ENCODE measurements at regions of chr2 and their contacts with region 1.

Region 1: DNA sequence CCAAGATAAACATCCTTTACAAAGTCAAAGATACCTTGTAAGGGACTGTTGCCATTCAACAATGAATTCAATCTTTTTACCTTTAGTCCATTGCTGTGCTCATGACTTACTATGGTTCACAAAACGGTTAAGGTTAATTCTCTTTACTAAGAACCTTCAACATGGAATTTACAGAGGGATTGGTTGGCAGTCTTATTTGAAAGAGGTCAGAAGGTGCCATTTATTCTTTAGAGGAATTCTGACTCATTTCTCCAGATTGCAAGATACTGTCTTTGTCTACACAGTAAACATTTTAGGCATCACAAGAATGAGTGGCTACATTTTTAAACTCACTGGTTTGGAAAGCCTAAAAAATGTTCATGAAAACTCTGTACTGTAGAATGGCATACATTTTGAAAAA is 17.4 kb downstream of the KCNH7 start:
- DNase-seq: no peak
- H3K4me3 Mint-ChIP-seq: no peak overlapping the region
- H3K27ac Mint-ChIP-seq: peak overlapping the region; percentile 33
- H3K4me1 Mint-ChIP-seq: peaks cover 35% of the 10 kb centered on the region
- H3K27me3 Mint-ChIP-seq: no peaks in the 10 kb centered on the region
- CTCF ChIP-seq: no peak

Region 2: DNA sequence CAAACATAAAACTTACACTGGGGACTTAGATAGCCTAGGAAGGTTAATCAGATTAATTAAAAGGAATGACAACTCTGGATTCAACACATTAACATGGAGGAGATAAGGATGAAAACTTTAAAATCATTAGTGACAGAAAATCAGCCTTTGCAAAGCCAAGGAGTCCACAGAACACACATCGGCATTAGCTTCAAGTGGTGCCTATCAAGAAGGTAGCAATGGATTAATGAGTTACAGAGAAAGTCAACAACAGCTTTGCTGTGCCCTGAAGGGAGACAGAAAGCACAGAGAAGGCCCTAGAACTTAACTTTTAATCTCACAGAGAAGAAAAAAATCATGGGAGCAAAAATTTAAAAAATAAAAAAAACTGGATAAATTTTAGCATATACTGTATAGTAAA is 71.2 kb before region 1 on chr2:
- CTCF ChIA-PET with region 1: no interaction called
- intact Hi-C with region 1: loop called (anchors 5 kb)
- DNase-seq: no peak
- H3K4me3 Mint-ChIP-seq: no peak overlapping the region
- H3K27ac Mint-ChIP-seq: no peak overlapping the region
- H3K4me1 Mint-ChIP-seq: peaks cover 15% of the 10 kb centered on the region
- H3K27me3 Mint-ChIP-seq: no peaks in the 10 kb centered on the region
- CTCF ChIP-seq: no peak

Region 3: GRCh38 chr2:162839419-162839818 is 18.3 kb after region 1 on chr2:
- CTCF ChIA-PET with region 1: no interaction called
- intact Hi-C with region 1: no loop called
- DNase-seq: peak; percentile 17
- H3K4me3 Mint-ChIP-seq: peak overlapping the region; percentile 80
- H3K27ac Mint-ChIP-seq: peak overlapping the region; percentile 9
- H3K4me1 Mint-ChIP-seq: peaks cover 16% of the 10 kb centered on the region
- H3K27me3 Mint-ChIP-seq: no peaks in the 10 kb centered on the region
- CTCF ChIP-seq: no peak